Activated naive CD4-positive, alpha-beta T cell treated with anti-CD3 and anti-CD28 coated beads for 36 hours (primary cell): ENCODE measurements at regions of chr2 and their contacts with region 1.

Region 1: DNA sequence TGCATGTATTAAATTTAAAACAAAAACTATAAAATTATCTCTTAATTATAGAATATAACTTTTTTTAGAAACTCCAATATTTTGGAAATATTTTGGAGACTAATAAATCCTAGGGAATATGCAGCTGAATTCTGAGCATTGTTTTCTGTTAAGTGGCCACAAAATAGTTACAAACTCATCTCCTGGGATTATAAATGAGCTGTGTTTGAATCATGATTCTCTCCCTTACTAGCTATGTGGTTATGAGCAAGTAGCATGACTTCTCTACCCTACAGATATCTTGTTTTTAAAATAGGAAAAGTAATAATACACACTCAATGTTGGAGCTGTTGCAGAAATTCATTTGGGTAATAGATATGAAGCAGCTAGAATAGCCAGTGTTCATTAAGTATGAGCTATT is 137.9 kb upstream of the ITGA4 start:
- DNase-seq: no peak
- H3K4me3 Mint-ChIP-seq: no peak overlapping the region
- H3K27ac Mint-ChIP-seq: no peak overlapping the region
- H3K4me1 Mint-ChIP-seq: peaks cover 36% of the 10 kb centered on the region
- H3K27me3 Mint-ChIP-seq: no peaks in the 10 kb centered on the region

Region 2: GRCh38 chr2:181334158-181334826 is 15.0 kb after region 1 on chr2:
- CTCF ChIA-PET with region 1: interaction called, 3 read pairs
- intact Hi-C with region 1: loop called (anchors 1 kb)
- DNase-seq: no peak
- H3K4me3 Mint-ChIP-seq: no peak overlapping the region
- H3K27ac Mint-ChIP-seq: peak overlapping the region; percentile 44
- H3K4me1 Mint-ChIP-seq: peaks cover 18% of the 10 kb centered on the region
- H3K27me3 Mint-ChIP-seq: no peaks in the 10 kb centered on the region

Region 3: GRCh38 chr2:181683518-181684453 is 364.5 kb after region 1 on chr2:
- CTCF ChIA-PET with region 1: no interaction called
- intact Hi-C with region 1: loop called (anchors 5 kb)
- DNase-seq: peak; percentile 27
- H3K4me3 Mint-ChIP-seq: peak overlapping the region; percentile 68
- H3K27ac Mint-ChIP-seq: no peak overlapping the region
- H3K4me1 Mint-ChIP-seq: peaks cover 47% of the 10 kb centered on the region
- H3K27me3 Mint-ChIP-seq: peaks cover 80% of the 10 kb centered on the region